ENCODE measurements at regions of chr2 and their contacts with region 1.

Region 1: GRCh38 chr2:96174251-96175144 is 29.3 kb upstream of the DUSP2 start:
- DNase-seq: peak; percentile 92
- ATAC-seq: peak; percentile 99
- H3K4me3 Mint-ChIP-seq: peak overlapping the region; percentile 29
- H3K27ac Mint-ChIP-seq: peak overlapping the region; percentile 70
- H3K4me1 Mint-ChIP-seq: peaks cover 25% of the 10 kb centered on the region
- H3K27me3 Mint-ChIP-seq: no peaks in the 10 kb centered on the region
- CTCF ChIP-seq: peak; percentile 91

Region 2: DNA sequence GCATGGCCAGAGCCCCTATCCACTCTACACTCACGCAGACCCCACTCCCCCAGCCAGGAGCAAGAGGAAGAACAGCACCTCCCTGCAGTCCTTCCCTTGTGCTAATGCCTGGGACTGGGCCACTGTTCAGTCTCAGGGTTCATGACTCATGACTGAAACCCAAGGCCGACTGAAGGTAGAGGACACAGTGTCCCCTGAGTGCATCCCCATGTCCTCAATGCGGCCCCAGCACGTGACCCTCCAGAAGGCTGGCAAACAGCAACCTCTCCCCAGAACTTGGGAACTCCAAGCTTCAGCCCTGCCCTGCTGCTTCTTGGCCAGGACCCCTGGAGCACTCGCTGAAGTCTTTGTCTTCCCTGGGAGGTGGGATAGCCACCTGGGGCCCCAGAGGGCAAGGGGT is 52.1 kb before region 1 on chr2:
- CTCF ChIA-PET with region 1: interaction called, 94 read pairs
- POLR2A ChIA-PET with region 1: no interaction called
- intact Hi-C with region 1: no loop called
- DNase-seq: no peak
- ATAC-seq: no peak
- H3K4me3 Mint-ChIP-seq: no peak overlapping the region
- H3K27ac Mint-ChIP-seq: no peak overlapping the region
- H3K4me1 Mint-ChIP-seq: peaks cover 17% of the 10 kb centered on the region
- H3K27me3 Mint-ChIP-seq: peaks cover 25% of the 10 kb centered on the region
- CTCF ChIP-seq: no peak

Region 3: DNA sequence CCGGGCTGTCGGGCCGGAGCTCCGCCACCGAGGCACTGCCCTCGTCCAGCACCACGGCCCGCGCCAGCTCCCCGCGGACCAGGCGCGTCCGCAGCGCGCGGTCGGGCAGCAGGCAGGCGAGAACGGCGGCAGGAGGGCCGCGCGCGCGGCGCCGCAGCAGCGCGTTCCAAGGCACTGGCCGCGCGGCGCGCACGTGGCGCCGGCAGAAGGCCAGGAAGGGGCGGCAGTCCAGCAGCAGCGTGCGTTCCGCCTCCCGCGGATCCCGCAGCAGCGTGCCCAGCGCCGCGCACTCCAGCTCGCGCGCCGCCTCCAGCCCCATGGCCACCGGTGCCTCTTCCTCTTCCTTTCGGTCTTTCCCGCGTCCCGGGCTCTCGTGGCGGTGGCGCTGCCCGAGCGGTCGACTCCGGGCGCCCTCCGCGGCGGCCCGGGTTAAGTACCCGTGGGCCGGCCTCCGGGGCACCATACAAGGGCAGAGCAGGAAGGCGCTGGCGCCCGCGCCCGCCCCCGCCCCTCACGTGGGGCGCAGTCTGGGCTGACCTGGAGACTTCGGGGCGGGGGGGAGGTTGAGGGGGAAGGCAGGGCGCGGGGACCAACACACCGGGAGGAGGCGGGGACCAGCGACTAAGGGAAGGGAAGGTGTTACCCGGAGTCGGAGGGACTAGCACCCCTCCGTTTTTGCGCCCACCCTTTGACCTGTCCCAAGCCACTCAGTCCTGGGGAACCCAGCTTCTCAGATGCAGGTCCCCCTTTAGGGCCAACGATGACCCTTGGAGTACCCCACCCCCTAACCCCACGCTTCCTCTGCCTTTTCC is 29.3 kb before region 1 on chr2 and contains the start of gene DUSP2:
- CTCF ChIA-PET with region 1: interaction called, 540 read pairs
- POLR2A ChIA-PET with region 1: interaction called, 690 read pairs
- intact Hi-C with region 1: no loop called
- DNase-seq: peak; percentile 96
- ATAC-seq: peak; percentile 47
- H3K4me3 Mint-ChIP-seq: peak within 1 kb of the TSS; percentile 98
- H3K27ac Mint-ChIP-seq: peak within 1 kb of the TSS; percentile 98
- H3K4me1 Mint-ChIP-seq: peaks cover 53% of the 10 kb centered on the region
- H3K27me3 Mint-ChIP-seq: no peaks in the 10 kb centered on the region
- CTCF ChIP-seq: no peak
- total RNA-seq, gene DUSP2: 311 to 313 TPM

Region 4: GRCh38 chr2:96186562-96186961 is 12.1 kb after region 1 on chr2:
- CTCF ChIA-PET with region 1: interaction called, 10 read pairs
- POLR2A ChIA-PET with region 1: interaction called, 3 read pairs
- intact Hi-C with region 1: no loop called
- DNase-seq: no peak
- ATAC-seq: no peak
- H3K4me3 Mint-ChIP-seq: no peak overlapping the region
- H3K27ac Mint-ChIP-seq: peak overlapping the region; percentile 25
- H3K4me1 Mint-ChIP-seq: peaks cover 3% of the 10 kb centered on the region
- H3K27me3 Mint-ChIP-seq: no peaks in the 10 kb centered on the region
- CTCF ChIP-seq: no peak

Region 5: DNA sequence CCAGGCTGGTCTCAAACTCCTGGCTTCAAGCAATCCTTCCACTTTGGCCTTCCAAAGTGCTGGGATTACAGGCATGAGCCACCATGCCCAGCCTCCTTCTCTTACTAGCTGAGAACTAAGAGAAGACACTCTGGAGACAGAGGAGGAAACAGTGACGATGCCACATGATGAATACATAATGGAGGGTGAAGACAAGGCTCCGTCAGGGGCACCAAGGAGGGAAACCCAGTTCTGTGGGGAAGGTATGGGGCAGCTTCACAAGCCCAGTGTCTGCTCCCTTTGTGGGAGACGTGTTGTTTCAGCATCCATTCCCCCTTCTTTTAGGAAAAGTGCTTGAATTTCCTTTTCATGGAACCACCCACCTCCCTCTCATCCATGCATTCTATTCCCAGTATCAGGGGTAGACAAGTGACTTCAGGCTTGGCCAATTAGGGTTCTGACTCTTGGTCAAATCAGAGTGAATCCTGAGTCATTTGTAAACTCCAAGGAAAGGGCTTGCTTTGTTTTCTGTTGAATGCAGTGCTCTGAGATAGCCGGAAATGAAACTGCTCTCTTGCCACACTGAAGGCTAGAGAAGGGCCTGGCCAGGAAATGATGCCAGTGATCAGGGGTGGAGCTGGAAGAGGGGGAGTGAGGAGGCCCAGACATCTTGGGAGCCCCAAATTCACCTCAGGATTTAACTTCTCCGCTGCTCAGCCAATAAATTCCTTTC is 67.6 kb after region 1 on chr2:
- CTCF ChIA-PET with region 1: interaction called, 13 read pairs
- POLR2A ChIA-PET with region 1: interaction called, 3 read pairs
- intact Hi-C with region 1: no loop called
- DNase-seq: peak; percentile 79
- ATAC-seq: peak; percentile 97
- H3K4me3 Mint-ChIP-seq: peak overlapping the region; percentile 50
- H3K27ac Mint-ChIP-seq: peak overlapping the region; percentile 95
- H3K4me1 Mint-ChIP-seq: peaks cover 42% of the 10 kb centered on the region
- H3K27me3 Mint-ChIP-seq: no peaks in the 10 kb centered on the region
- CTCF ChIP-seq: no peak

Measured in activated CD8-positive, alpha-beta T cell treated with anti-CD3 and anti-CD28 coated beads for 36 hours (primary cell).